ENCODE measurements at regions of chr17 and their contacts with region 1.

Region 1: DNA sequence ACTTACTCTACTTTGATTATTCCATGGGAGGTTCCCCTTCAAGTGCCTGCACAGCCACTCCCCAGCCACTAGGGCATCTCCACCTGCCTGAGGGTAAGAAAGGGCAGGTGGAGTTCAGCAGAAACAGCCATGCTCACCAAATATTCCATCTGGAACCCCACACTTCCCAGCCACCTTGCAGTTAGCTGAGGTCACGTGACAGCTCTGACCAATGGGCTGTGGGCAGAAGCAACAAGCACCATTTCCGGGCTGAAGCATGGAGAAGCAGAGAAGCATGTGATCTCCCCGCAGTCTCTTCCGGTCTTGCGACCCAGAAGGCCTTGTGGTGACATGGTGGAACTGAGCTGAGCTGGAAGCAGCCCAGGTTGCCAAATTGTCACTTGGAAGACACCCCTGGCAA is 108.6 kb downstream of the CCT6B start:
- DNase-seq: no peak
- H3K4me3 ChIP-seq: no peak overlapping the region
- H3K27ac ChIP-seq: no peak overlapping the region
- H3K4me1 ChIP-seq: peaks cover 0 to 9% (median 0%) of the 10 kb centered on the region in 4 experiments; a peak in 3 of 7 replicates
- H3K27me3 ChIP-seq: no peaks in the 10 kb centered on the region; a peak in 1 of 7 replicates
- CTCF ChIP-seq: peak; percentile 37 to 64 (median 63); a peak in 3 of 4 replicates
- EP300 ChIP-seq: no peak
- POLR2A ChIP-seq: no peak
- RAD21 ChIP-seq: peak; percentile 7 to 26; a peak in 1 of 4 replicates

Region 2: GRCh38 chr17:34756637-34757021 is 96.0 kb before region 1 on chr17:
- CTCF ChIA-PET with region 1: no interaction called
- POLR2A ChIA-PET with region 1: no interaction called
- DNase-seq: no peak
- H3K4me3 ChIP-seq: no peak overlapping the region
- H3K27ac ChIP-seq: no peak overlapping the region
- H3K4me1 ChIP-seq: peaks cover 2 to 11% (median 5%) of the 10 kb centered on the region in 4 experiments; a peak in 6 of 7 replicates
- H3K27me3 ChIP-seq: no peaks in the 10 kb centered on the region
- CTCF ChIP-seq: no peak
- EP300 ChIP-seq: no peak
- POLR2A ChIP-seq: no peak
- RAD21 ChIP-seq: no peak

Region 3: GRCh38 chr17:34840750-34841149 is 11.9 kb before region 1 on chr17:
- CTCF ChIA-PET with region 1: interaction called, 12 read pairs
- POLR2A ChIA-PET with region 1: interaction called, 7 read pairs
- DNase-seq: peak in 1 of 2 experiments; percentile 48
- H3K4me3 ChIP-seq: no peak overlapping the region
- H3K27ac ChIP-seq: no peak overlapping the region
- H3K4me1 ChIP-seq: peaks cover 0 to 7% (median 4%) of the 10 kb centered on the region in 4 experiments; a peak in 4 of 7 replicates
- H3K27me3 ChIP-seq: no peaks in the 10 kb centered on the region
- CTCF ChIP-seq: no peak
- EP300 ChIP-seq: no peak
- POLR2A ChIP-seq: no peak
- RAD21 ChIP-seq: no peak

Region 4: DNA sequence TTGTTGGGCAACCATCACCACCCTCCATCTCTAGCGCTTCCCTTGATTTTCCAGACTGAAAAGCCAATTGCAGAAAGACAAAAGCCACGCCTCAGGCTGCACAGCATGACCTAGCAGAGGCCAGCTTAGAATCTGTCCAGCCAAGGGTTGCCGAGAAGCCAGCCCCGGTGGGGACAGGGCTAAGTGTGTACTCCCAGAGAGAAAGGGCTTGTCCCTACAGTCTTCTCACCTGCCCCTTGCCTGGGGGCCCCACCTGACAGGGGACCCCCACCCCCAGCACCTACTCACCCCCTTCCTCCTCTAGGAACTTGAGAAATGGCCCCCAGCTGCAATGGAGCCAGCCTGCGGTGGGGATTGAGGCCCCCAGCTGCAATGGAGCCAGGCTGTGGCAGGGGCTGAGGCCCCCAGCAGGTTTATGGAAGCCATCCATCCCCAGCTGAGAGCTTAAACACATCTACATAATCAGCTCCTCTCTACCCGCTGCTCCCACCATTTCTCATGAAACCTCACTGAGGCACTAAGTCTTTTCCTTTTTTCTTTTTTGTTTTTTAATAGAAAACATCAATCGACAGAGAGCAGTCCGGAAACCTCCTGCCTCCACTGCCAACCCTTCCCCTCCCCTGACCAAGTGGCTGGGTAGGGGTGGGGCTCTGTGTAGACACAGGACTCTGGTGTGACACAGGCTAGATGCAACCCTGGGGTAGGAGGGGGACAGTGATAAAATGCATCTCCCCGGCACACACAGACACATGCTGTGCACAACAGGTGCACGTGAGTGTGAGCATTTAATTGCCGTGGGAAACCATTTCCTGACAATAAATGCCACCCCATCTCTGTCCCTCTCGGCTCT is 30.8 kb after region 1 on chr17:
- CTCF ChIA-PET with region 1: interaction called, 10 read pairs
- POLR2A ChIA-PET with region 1: no interaction called
- DNase-seq: no peak
- H3K4me3 ChIP-seq: 0 out of 8 replicates have a peak overlapping the region, but pooled peaks of 1 of the 4 experiments have one; percentile 24
- H3K27ac ChIP-seq: no peak overlapping the region
- H3K4me1 ChIP-seq: peaks cover 2 to 13% (median 6%) of the 10 kb centered on the region in 4 experiments
- H3K27me3 ChIP-seq: no peaks in the 10 kb centered on the region
- CTCF ChIP-seq: no peak
- EP300 ChIP-seq: no peak
- POLR2A ChIP-seq: no peak
- RAD21 ChIP-seq: no peak

Measured in H1 (cell line).